IMR-90 (cell line): ENCODE measurements at regions of chr1 and their contacts with region 1.

Region 1: DNA sequence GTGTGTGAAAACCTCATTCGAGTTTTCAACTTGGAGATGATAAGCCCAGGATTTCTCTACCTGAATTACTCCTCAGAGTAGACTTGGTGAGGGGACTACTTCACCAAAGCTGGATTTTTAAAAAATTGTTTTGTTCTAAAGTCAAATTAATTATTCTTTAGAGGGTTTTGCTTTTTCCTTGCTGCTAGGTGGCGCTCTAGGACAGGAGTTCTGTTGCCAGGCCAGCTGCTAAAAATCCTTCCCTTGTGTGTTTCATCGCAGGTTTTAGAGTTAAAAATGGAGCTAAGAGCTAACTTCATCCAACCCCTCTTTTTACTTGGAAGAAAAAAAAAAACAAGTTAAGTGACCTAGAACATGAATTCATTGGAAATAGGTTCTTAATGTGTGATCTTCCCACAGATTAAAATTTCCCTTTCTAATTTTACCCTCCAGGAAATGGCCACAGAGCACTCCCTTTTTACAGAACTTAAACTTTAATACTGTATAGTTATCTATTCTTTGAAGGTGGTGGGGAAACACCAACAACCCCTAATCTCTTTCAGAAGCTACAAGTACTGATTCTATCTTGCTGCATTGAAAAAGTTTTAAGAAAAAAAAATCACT is 36.7 kb upstream of the FAM163A start:
- DNase-seq: peak; percentile 67
- ATAC-seq: peak; percentile 62
- H3K4me3 ChIP-seq: no peak overlapping the region
- H3K27ac ChIP-seq: no peak overlapping the region
- H3K4me1 ChIP-seq: no peaks in the 10 kb centered on the region
- H3K27me3 ChIP-seq: peaks cover 20% of the 10 kb centered on the region
- CTCF ChIP-seq: peak; percentile 91
- POLR2A ChIP-seq: no peak
- RAD21 ChIP-seq: peak; percentile 92

Region 2: GRCh38 chr1:179770884-179771502 is 64.6 kb after region 1 on chr1:
- CTCF ChIA-PET with region 1: interaction called, 4 read pairs
- POLR2A ChIA-PET with region 1: no interaction called
- dilution Hi-C with region 1: no loop called
- in situ Hi-C with region 1: no loop called
- intact Hi-C with region 1: loop called (anchors 2 kb)
- DNase-seq: no peak
- ATAC-seq: peak; percentile 49
- H3K4me3 ChIP-seq: no peak overlapping the region
- H3K27ac ChIP-seq: no peak overlapping the region
- H3K4me1 ChIP-seq: no peaks in the 10 kb centered on the region
- H3K27me3 ChIP-seq: peaks cover 16% of the 10 kb centered on the region
- CTCF ChIP-seq: peak; percentile 11; the same call in 1 of the 2 replicates
- POLR2A ChIP-seq: no peak
- RAD21 ChIP-seq: no peak

Region 3: GRCh38 chr1:180765151-180765550 is 1058.7 kb after region 1 on chr1:
- CTCF ChIA-PET with region 1: no interaction called
- POLR2A ChIA-PET with region 1: no interaction called
- dilution Hi-C with region 1: no loop called
- in situ Hi-C with region 1: no loop called
- intact Hi-C with region 1: no loop called
- DNase-seq: peak; percentile 69
- ATAC-seq: peak; percentile 93
- H3K4me3 ChIP-seq: no peak overlapping the region
- H3K27ac ChIP-seq: no peak overlapping the region
- H3K4me1 ChIP-seq: peaks cover 3% of the 10 kb centered on the region
- H3K27me3 ChIP-seq: no peaks in the 10 kb centered on the region
- CTCF ChIP-seq: no peak
- POLR2A ChIP-seq: no peak
- RAD21 ChIP-seq: no peak